Panc1 (cell line): ENCODE measurements at regions of chr15 and their contacts with region 1.

Region 1: GRCh38 chr15:55846116-55846707 is 103.3 kb upstream of the PRTG start:
- DNase-seq: peak; percentile 76
- ATAC-seq: peak; percentile 88
- H3K4me3 ChIP-seq: no peak overlapping the region
- H3K27ac ChIP-seq: no peak overlapping the region
- H3K4me1 ChIP-seq: peaks cover 4% of the 10 kb centered on the region; the same call in 1 of the 2 replicates
- H3K27me3 ChIP-seq: no peaks in the 10 kb centered on the region
- CTCF ChIP-seq: peak; percentile 85

Region 2: DNA sequence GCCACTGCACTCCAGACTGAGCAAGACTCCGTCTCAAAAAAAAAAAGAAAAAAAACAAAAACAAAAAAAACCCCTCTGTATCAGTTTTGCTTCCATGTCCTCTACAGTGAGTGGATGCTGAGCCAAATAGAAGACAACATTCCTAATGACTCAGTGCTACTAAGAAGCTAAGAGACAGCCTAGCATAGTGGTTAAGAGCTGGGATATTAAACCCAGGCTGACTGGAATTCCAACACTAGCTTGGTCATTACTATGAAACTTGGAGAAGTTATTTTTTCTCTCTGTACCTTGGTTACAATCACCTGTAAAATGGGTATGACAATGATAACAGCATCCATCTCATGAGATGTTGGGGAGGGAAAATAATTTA is 197.2 kb before region 1 on chr15:
- CTCF ChIA-PET with region 1: interaction called, 4 read pairs
- POLR2A ChIA-PET with region 1: no interaction called
- in situ Hi-C with region 1: no loop called
- intact Hi-C with region 1: loop called (anchors 5 kb)
- DNase-seq: no peak
- ATAC-seq: no peak; the same call in 1 of the 2 replicates
- H3K4me3 ChIP-seq: no peak overlapping the region
- H3K27ac ChIP-seq: no peak overlapping the region
- H3K4me1 ChIP-seq: no peaks in the 10 kb centered on the region
- H3K27me3 ChIP-seq: no peaks in the 10 kb centered on the region
- CTCF ChIP-seq: no peak

Region 3: GRCh38 chr15:56252386-56252785 is 406.2 kb after region 1 on chr15:
- CTCF ChIA-PET with region 1: no interaction called
- POLR2A ChIA-PET with region 1: no interaction called
- in situ Hi-C with region 1: no loop called
- intact Hi-C with region 1: no loop called
- DNase-seq: no peak
- ATAC-seq: no peak
- H3K4me3 ChIP-seq: no peak overlapping the region
- H3K27ac ChIP-seq: no peak overlapping the region
- H3K4me1 ChIP-seq: no peaks in the 10 kb centered on the region
- H3K27me3 ChIP-seq: no peaks in the 10 kb centered on the region
- CTCF ChIP-seq: no peak